B cell (primary cell): ENCODE measurements at regions of chr13 and their contacts with region 1.

Region 1: DNA sequence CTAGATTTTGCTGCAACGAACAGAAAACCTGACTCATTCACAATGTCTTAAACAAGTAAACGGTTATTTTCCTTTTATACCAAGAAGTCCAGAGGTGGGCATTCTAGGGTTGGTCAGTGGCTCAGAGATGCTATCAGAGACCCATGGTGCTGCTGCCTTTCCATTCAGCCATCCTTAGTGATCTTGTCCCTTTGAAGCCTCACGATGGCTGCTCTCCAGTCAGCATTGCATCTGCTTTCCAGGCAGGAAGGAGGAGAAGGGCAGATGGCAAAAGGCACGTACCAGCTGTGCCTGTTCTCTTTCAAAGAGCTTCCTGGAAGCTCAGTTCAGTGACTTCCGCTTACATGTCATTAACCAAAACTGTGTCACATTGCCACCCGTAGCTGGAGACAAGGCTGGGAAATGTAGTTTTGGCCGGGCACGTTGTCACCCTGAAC is 30.1 kb downstream of the WDFY2 start:
- DNase-seq: peak; percentile 69
- ATAC-seq: peak; percentile 83
- H3K4me3 ChIP-seq: peak overlapping the region; percentile 6 to 56 (median 48)
- H3K4me3 Mint-ChIP-seq: peak overlapping the region; percentile 88
- H3K27ac ChIP-seq: peak overlapping the region; percentile 55 to 86
- H3K27ac Mint-ChIP-seq: peak overlapping the region; percentile 98
- H3K4me1 ChIP-seq: peaks cover 44 to 46% of the 10 kb centered on the region in 2 donors
- H3K4me1 Mint-ChIP-seq: peaks cover 52% of the 10 kb centered on the region
- H3K27me3 ChIP-seq: no peaks in the 10 kb centered on the region
- H3K27me3 Mint-ChIP-seq: no peaks in the 10 kb centered on the region
- CTCF ChIP-seq: no peak

Region 2: DNA sequence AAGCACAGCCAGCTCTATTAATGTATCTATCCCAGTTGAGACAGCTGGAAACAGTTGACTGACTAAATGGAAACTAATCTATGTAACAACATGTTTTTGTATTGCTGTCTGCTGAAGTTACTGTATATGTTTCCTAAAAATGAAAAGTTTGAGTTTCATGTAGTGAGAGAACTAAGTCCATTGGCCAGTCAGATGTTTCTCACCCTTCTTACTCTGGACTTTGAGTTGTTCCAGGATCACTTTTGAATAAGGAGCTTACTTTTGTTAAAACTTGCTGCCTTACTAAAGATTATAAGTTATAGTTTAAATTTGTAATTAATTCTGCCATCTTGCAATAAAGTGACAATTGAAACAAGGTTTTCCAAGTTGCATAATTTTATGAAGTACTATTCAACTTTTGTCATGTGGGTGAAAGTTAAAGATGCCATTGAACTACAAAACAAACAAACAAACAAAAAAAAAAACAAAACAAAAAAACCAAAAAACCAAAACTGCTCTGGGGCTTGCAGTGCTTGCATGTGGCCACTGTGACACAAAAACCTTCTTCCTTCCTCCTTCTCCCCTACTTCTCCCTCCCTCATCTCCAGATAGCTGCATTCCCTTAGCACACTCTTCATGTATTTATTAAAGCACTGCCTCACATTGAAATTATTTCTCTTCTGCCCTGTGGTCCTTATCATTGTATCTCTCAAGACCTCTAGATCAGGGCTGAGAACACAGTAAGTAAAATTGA is 14.8 kb before region 1 on chr13:
- CTCF ChIA-PET with region 1: interaction called, 3 read pairs
- POLR2A ChIA-PET with region 1: no interaction called
- intact Hi-C with region 1: loop called (anchors 2 kb)
- DNase-seq: no peak
- ATAC-seq: no peak
- H3K4me3 ChIP-seq: no peak overlapping the region
- H3K4me3 Mint-ChIP-seq: peak overlapping the region; percentile 44
- H3K27ac ChIP-seq: peak overlapping the region in 1 of 2 donors; percentile 45
- H3K27ac Mint-ChIP-seq: peak overlapping the region; percentile 64
- H3K4me1 ChIP-seq: peaks cover 27 to 37% of the 10 kb centered on the region in 2 donors
- H3K4me1 Mint-ChIP-seq: peaks cover 65% of the 10 kb centered on the region
- H3K27me3 ChIP-seq: no peaks in the 10 kb centered on the region
- H3K27me3 Mint-ChIP-seq: no peaks in the 10 kb centered on the region
- CTCF ChIP-seq: no peak